ENCODE measurements at regions of chr10 and their contacts with region 1.

Region 1: DNA sequence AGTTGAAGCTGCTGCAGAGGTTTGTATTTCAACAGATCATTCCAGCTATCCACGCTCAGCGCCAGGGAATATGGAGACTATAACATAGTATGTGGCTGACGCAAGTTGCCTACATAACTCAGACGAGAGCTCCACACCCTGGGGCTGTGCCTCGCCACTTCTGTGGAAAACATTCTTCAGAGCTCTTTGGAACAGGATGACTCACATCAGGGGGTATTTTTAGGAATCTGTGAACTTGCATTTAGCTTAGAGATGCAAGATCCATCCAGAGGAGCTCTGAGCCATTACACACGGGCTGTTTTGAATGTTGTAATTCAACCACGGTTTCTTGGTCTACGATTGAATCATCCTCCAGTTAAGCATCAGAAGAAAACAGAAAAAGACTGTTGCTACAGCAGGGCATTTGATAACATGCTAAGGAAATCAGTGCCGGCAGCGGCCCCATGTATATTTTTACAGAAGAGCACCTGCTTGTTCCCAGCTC is 481.5 kb upstream of the AKR1E2 start:
- DNase-seq: peak; percentile 70
- H3K4me3 Mint-ChIP-seq: no peak overlapping the region
- H3K27ac Mint-ChIP-seq: peak overlapping the region; percentile 30
- H3K4me1 Mint-ChIP-seq: peaks cover 23% of the 10 kb centered on the region
- H3K27me3 Mint-ChIP-seq: no peaks in the 10 kb centered on the region

Region 2: DNA sequence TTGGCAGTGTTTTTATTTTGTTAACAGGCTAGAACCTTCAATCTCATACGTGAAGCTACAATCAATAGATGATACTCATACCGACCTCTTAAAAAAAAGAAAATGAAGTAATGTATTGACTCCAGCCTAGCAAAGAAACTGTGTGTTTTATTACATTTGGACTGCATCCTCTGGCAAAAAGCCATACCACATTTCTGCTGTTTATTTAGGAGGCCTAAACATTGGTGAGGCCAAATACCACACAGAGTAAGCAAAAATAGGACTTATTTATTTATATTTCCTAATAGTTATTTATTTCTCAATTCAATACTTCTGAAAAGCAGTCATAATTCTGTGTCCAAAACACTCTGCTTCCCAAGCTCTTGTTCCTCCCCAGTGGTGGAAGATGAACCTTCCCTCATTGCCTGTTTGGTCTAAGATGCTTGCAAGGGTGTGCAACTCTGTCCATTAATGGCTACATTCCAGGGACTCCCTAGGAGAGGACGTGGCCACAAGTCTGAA is 160.7 kb before region 1 on chr10:
- CTCF ChIA-PET with region 1: no interaction called
- POLR2A ChIA-PET with region 1: no interaction called
- intact Hi-C with region 1: loop called (anchors 2 kb)
- DNase-seq: no peak
- H3K4me3 Mint-ChIP-seq: no peak overlapping the region
- H3K27ac Mint-ChIP-seq: no peak overlapping the region
- H3K4me1 Mint-ChIP-seq: peaks cover 16% of the 10 kb centered on the region
- H3K27me3 Mint-ChIP-seq: no peaks in the 10 kb centered on the region

Region 3: GRCh38 chr10:4241724-4242345 is 102.7 kb before region 1 on chr10:
- CTCF ChIA-PET with region 1: no interaction called
- POLR2A ChIA-PET with region 1: no interaction called
- intact Hi-C with region 1: loop called (anchors 5 kb)
- DNase-seq: no peak
- H3K4me3 Mint-ChIP-seq: no peak overlapping the region
- H3K27ac Mint-ChIP-seq: no peak overlapping the region
- H3K4me1 Mint-ChIP-seq: peaks cover 32% of the 10 kb centered on the region
- H3K27me3 Mint-ChIP-seq: no peaks in the 10 kb centered on the region

Region 4: DNA sequence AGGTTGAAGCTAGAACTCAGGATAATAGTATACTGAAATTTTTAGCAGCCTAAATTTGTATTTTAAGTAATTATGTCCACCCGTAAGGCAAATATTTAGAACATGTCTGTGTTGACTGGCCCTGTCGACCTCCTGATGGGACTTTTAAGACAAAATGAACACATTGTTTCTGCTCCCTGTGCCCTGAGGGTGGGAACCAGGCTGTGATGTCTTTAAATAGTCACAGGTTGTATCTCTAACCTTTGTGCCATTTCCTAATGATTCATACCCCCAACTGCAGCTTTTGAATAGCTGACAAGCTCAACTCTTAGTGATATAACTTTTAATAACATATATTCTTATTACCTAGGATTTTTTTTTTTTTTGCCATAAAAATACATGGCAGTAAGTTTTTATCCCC is 13.4 kb before region 1 on chr10:
- CTCF ChIA-PET with region 1: no interaction called
- POLR2A ChIA-PET with region 1: no interaction called
- intact Hi-C with region 1: no loop called
- DNase-seq: no peak
- H3K4me3 Mint-ChIP-seq: no peak overlapping the region
- H3K27ac Mint-ChIP-seq: no peak overlapping the region
- H3K4me1 Mint-ChIP-seq: no peaks in the 10 kb centered on the region
- H3K27me3 Mint-ChIP-seq: no peaks in the 10 kb centered on the region

Region 5: DNA sequence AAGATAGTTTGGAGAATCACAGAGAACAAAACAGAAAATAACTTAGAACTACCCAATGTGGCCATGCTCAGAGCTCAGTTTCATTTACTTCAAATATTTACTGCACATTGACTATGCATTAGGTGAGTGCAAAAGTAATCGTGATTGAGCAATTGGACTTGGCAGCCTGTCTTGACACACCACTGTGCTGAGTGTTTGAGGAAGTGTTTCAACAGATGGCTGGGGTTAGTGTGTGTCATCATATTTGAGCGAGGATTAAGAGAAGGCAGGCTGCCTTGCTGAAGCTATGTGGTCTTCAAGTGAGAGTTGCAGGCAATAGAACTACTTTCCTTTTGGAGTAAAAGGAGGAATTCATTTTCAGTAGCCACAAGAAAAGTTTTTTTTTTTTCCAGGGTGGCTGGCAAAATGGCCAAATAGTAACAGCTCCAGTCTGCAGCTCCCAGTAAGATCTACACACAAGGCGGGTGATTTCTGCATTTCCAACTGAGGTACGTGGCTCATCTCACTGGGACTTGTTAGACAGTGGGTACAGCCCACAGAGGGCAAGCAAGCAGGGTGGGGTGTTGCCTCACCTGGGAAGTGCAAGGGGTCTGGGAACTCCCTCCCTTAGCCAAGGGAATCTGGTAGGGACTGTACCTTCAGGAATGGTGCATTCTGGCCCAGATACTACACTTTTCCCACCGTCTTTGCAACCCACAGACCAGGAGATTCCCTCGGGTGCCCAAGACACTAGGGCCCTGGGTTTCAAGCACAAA is 889.7 kb after region 1 on chr10:
- CTCF ChIA-PET with region 1: no interaction called
- POLR2A ChIA-PET with region 1: no interaction called
- intact Hi-C with region 1: no loop called
- DNase-seq: no peak
- H3K4me3 Mint-ChIP-seq: no peak overlapping the region
- H3K27ac Mint-ChIP-seq: no peak overlapping the region
- H3K4me1 Mint-ChIP-seq: no peaks in the 10 kb centered on the region
- H3K27me3 Mint-ChIP-seq: no peaks in the 10 kb centered on the region